Activated CD4-positive, alpha-beta memory T cell treated with anti-CD3 and anti-CD28 coated beads for 36 hours (primary cell): ENCODE measurements at regions of chr2 and their contacts with region 1.

Region 1: DNA sequence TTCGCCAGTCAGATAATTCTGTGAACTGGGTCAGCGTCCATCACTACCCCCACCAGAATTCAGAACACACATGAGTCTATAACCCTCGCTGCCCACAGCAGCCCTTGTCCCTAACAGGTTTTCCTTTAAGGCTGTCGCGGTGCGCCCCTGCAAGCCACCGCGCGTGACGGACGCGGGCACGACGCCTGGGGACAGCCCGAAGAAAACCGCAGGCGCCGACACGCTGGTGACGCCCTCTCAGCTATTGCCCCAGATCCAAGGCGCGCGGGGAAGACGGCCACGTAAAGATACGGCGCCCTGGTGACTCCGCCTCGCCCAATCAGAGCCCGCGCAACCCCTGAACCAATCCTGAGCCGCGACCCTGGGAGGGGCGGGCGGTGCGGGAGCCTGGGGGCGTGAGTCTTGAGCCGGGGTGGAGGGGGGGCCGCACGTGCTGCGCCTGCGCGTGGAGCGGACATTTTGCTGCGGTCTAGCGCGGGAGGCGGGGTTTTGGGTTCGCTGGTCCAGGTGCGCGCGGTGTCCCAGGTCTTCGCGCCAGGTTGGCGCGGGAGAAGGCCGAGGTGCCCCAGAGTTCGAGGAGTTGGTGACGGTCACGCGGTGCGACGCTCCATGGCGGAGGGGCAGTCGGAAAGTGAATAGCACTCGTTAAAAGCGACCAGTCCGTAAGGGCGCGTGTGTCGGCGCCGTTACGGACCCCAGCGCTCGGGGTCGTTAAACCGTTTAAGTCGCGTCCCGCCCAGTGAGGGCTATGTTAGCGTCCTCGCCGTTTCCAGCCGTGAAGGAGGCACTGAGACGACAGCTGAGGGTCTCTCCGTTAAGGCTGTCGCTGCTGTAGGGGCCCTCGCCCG is 15.9 kb downstream of the NMUR1 start:
- DNase-seq: peak; percentile 99
- H3K4me3 Mint-ChIP-seq: peak overlapping the region; percentile 93
- H3K27ac Mint-ChIP-seq: peak overlapping the region; percentile 91
- H3K4me1 Mint-ChIP-seq: peaks cover 14% of the 10 kb centered on the region
- H3K27me3 Mint-ChIP-seq: no peaks in the 10 kb centered on the region

Region 2: DNA sequence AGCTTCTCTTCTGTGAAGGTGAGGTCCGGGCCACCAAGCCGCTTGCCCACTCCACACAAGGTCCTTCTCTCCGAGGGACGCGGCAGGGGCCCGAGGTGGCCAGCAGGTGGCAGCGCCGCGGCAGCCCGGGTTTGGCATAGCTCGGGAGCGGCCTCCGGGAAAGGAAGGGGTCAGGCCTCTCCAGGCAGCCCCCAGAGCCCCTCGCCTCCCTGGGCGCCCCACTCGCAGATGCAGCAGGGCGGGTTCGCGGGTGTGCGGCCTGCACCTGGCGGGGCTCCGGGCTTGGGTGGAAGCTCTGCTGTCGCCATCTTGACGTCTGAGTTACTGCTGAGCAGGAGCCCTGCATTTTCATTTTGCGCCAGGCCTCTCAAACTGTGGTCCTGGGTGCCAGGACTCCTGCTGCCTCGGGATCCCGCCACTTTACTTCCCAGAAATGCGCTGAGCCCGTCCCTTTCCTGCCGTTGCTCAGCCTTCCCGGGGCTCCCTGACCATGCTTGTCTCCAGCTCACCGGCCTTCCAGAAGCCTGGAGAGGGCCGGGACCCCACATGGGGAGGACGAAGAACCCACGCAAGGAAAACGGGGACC is 31.4 kb before region 1 on chr2:
- CTCF ChIA-PET with region 1: interaction called, 13 read pairs
- POLR2A ChIA-PET with region 1: interaction called, 3 read pairs
- intact Hi-C with region 1: loop called (anchors 1 kb)
- DNase-seq: peak; percentile 84
- H3K4me3 Mint-ChIP-seq: peak overlapping the region; percentile 80
- H3K27ac Mint-ChIP-seq: peak overlapping the region; percentile 88
- H3K4me1 Mint-ChIP-seq: peaks cover 10% of the 10 kb centered on the region
- H3K27me3 Mint-ChIP-seq: no peaks in the 10 kb centered on the region

Region 3: GRCh38 chr2:231530091-231531011 is 16.0 kb after region 1 on chr2 and contains the start of gene NMUR1:
- CTCF ChIA-PET with region 1: interaction called, 17 read pairs
- POLR2A ChIA-PET with region 1: no interaction called
- intact Hi-C with region 1: no loop called
- DNase-seq: peak; percentile 77
- H3K4me3 Mint-ChIP-seq: peak within 1 kb of the TSS; percentile 13
- H3K27ac Mint-ChIP-seq: no peak within 1 kb of the TSS
- H3K4me1 Mint-ChIP-seq: peaks cover 14% of the 10 kb centered on the region
- H3K27me3 Mint-ChIP-seq: peaks cover 13% of the 10 kb centered on the region
- total RNA-seq, gene NMUR1: 0.07 TPM in 1 of 2 experiments, not detected in the other

Region 4: DNA sequence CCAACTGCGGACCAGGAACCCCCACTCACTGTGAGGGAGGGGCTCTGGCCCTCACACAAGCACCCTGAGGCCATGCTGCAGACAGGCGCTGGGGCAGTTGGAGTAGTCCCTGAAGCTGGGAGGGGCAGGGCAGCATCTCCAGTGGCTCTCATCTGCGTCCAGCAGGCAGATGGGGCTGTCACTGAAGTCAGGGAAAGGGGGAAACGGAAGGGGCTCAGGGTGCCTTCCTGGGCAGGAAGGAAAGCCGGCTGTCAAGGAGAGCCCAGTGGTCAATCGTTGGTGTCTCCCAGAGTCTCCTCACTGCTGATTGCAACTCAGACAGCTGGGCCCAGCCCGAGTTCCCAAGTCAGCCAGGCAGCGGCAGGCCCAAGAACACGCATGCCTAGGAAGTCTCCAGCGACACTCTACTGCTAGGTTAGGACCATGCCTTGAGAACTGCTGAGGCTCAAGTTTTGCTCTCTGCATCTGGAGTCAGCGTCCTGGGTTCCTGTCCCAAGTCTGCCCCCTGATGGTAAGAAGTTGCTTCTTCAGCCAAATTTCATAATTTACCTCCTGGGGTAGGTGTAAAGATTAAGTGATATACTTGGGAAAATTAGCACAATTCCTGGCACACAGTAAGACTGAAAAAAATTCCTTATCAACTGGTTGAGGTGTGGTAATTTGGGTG is 43.4 kb after region 1 on chr2:
- CTCF ChIA-PET with region 1: interaction called, 57 read pairs
- POLR2A ChIA-PET with region 1: interaction called, 3 read pairs
- intact Hi-C with region 1: loop called (anchors 1 kb)
- DNase-seq: peak; percentile 65
- H3K4me3 Mint-ChIP-seq: no peak overlapping the region
- H3K27ac Mint-ChIP-seq: no peak overlapping the region
- H3K4me1 Mint-ChIP-seq: peaks cover 9% of the 10 kb centered on the region
- H3K27me3 Mint-ChIP-seq: no peaks in the 10 kb centered on the region

Region 5: GRCh38 chr2:231604685-231605606 is 90.6 kb after region 1 on chr2:
- CTCF ChIA-PET with region 1: interaction called, 40 read pairs
- POLR2A ChIA-PET with region 1: no interaction called
- intact Hi-C with region 1: loop called (anchors 1 kb)
- DNase-seq: peak; percentile 94
- H3K4me3 Mint-ChIP-seq: peak overlapping the region; percentile 46
- H3K27ac Mint-ChIP-seq: no peak overlapping the region
- H3K4me1 Mint-ChIP-seq: peaks cover 3% of the 10 kb centered on the region
- H3K27me3 Mint-ChIP-seq: no peaks in the 10 kb centered on the region

Region 6: GRCh38 chr2:231662028-231662810 is 147.9 kb after region 1 on chr2:
- CTCF ChIA-PET with region 1: no interaction called
- POLR2A ChIA-PET with region 1: no interaction called
- intact Hi-C with region 1: loop called (anchors 1 kb)
- DNase-seq: peak; percentile 97
- H3K4me3 Mint-ChIP-seq: peak overlapping the region; percentile 65
- H3K27ac Mint-ChIP-seq: peak overlapping the region; percentile 94
- H3K4me1 Mint-ChIP-seq: peaks cover 12% of the 10 kb centered on the region
- H3K27me3 Mint-ChIP-seq: no peaks in the 10 kb centered on the region

Region 7: GRCh38 chr2:231706731-231707624 is 192.7 kb after region 1 on chr2:
- CTCF ChIA-PET with region 1: interaction called, 5 read pairs
- POLR2A ChIA-PET with region 1: no interaction called
- intact Hi-C with region 1: loop called (anchors 1 kb)
- DNase-seq: peak; percentile 98
- H3K4me3 Mint-ChIP-seq: peak overlapping the region; percentile 93
- H3K27ac Mint-ChIP-seq: peak overlapping the region; percentile 100
- H3K4me1 Mint-ChIP-seq: peaks cover 18% of the 10 kb centered on the region
- H3K27me3 Mint-ChIP-seq: peaks cover 3% of the 10 kb centered on the region